ENCODE measurements at regions of chr1 and their contacts with region 1.

Region 1: DNA sequence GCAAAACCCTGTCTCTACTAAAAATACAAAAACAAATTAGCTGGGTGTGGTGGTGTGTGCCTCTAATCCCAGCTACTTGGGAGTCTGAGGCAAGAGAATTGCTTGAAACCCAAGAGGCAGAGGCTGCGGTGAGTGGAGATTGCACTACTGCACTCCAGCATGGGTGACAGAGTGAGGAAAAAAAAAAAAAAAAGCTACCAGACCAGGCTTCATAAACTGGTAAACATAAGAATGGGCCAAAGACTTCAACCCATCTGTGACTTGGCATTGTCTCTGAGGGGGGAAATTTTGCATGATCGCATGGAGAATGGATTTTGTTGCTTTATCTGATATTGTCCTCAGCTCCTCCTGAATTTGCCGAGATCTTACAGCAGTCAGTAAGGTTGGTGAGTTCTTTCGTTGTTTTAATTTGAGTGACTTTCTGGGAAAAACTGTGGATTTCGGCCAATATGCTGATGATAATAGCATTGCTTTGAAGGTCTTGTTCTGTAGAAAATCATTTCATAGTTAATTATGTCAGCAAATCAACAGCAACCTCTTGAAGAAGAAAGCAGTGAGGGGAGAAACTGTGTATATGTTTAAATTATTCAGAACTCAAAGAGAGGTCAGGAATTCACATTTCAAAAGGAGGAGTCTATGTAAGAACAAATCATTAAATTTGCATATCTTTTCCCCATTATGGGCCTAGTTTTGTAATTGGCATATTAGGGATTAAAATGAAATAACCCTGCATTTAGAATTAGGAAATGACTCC is 13.1 kb downstream of the FGGY start:
- DNase-seq: no peak
- H3K4me3 ChIP-seq: no peak overlapping the region
- H3K27ac ChIP-seq: no peak overlapping the region
- H3K4me1 ChIP-seq: no peaks in the 10 kb centered on the region
- H3K27me3 ChIP-seq: no peaks in the 10 kb centered on the region
- CTCF ChIP-seq: no peak
- POLR2A ChIP-seq: no peak

Region 2: GRCh38 chr1:57536749-57537423 is 1773.1 kb before region 1 on chr1:
- intact Hi-C with region 1: no loop called
- DNase-seq: no peak
- H3K4me3 ChIP-seq: no peak overlapping the region
- H3K27ac ChIP-seq: no peak overlapping the region
- H3K4me1 ChIP-seq: no peaks in the 10 kb centered on the region
- H3K27me3 ChIP-seq: no peaks in the 10 kb centered on the region
- CTCF ChIP-seq: no peak
- POLR2A ChIP-seq: no peak

Region 3: GRCh38 chr1:59237900-59238299 is 72.1 kb before region 1 on chr1:
- intact Hi-C with region 1: loop called (anchors 2 kb)
- DNase-seq: no peak
- H3K4me3 ChIP-seq: no peak overlapping the region
- H3K27ac ChIP-seq: no peak overlapping the region
- H3K4me1 ChIP-seq: no peaks in the 10 kb centered on the region
- H3K27me3 ChIP-seq: no peaks in the 10 kb centered on the region
- CTCF ChIP-seq: no peak
- POLR2A ChIP-seq: no peak